ENCODE measurements at regions of chr5 and their contacts with region 1.

Region 1: DNA sequence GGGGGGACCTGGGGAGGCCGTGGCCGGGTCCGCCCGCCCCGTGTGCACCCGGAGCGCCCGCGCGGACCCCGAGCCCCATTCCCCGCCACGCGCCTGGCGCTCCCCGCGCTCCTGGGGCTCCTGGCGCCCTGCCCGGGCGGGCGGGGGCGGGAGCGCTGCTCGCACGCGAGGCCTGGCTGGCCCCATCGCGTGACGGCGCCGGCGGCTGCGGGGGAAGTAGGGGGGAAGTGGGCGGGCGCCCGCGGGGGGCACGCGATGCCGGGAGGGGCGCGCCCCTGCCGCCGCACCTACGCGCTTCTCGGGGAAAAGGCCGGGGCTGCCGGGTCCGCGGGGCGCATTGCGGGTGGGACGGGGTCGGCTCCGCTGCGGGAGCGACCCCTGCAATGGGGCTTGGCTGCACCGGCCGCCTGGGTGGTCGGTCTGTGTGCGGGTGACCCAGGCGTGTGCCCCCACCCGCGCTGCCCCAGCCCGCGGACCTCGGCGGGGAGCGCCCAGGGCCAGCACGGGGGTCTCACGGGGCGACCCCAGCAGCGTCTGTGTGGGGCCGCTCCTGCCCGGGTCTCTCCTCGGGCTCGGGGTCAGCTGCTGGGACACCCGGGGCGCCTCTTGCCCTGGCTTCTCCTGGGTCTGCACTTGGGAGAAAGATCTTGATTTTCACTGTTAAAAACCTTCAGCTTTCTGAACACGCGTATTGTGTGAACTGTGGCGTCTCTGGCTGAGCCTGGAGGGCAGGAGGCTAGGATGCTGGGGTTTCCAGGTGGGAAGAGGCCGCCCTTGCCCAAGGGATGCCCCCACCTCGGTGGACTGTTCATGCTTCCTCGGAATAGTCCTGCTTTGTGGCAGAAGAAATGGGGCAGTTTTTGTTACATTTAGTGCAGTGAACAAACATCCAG is 52.4 kb downstream of the AHRR start:
- DNase-seq: peak; percentile 77
- H3K4me3 Mint-ChIP-seq: peak overlapping the region; percentile 71
- H3K27ac Mint-ChIP-seq: peak overlapping the region; percentile 91
- H3K4me1 Mint-ChIP-seq: peaks cover 69% of the 10 kb centered on the region
- H3K27me3 Mint-ChIP-seq: no peaks in the 10 kb centered on the region

Region 2: GRCh38 chr5:350355-350754 is 23.6 kb before region 1 on chr5:
- intact Hi-C with region 1: no loop called
- DNase-seq: no peak
- H3K4me3 Mint-ChIP-seq: no peak overlapping the region
- H3K27ac Mint-ChIP-seq: peak overlapping the region; percentile 33
- H3K4me1 Mint-ChIP-seq: peaks cover 28% of the 10 kb centered on the region
- H3K27me3 Mint-ChIP-seq: no peaks in the 10 kb centered on the region

Region 3: GRCh38 chr5:392431-392988 is 18.6 kb after region 1 on chr5:
- intact Hi-C with region 1: loop called (anchors 1 kb)
- DNase-seq: peak; percentile 88
- H3K4me3 Mint-ChIP-seq: peak overlapping the region; percentile 72
- H3K27ac Mint-ChIP-seq: peak overlapping the region; percentile 97
- H3K4me1 Mint-ChIP-seq: peaks cover 40% of the 10 kb centered on the region
- H3K27me3 Mint-ChIP-seq: no peaks in the 10 kb centered on the region

Region 4: DNA sequence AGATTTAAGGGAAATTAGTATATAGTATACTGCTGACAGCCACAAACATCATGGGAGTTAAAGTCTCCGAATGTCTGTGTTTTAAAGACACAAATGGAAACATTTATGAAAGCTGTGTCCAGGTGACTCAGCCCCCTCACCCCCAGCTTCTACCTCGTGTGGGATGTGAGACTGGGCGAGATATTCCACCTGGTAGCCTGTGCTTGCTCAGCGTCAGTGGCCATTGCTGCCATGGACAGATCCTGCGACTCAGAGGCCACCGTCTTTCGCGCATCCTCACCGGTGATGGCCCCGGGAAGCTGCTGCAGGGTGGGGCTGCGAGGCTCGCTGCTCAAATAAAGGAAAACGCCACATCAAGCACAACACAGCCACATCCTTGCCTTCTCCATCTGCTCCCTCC is 37.8 kb after region 1 on chr5:
- intact Hi-C with region 1: loop called (anchors 5 kb)
- DNase-seq: no peak
- H3K4me3 Mint-ChIP-seq: no peak overlapping the region
- H3K27ac Mint-ChIP-seq: peak overlapping the region; percentile 69
- H3K4me1 Mint-ChIP-seq: peaks cover 33% of the 10 kb centered on the region
- H3K27me3 Mint-ChIP-seq: no peaks in the 10 kb centered on the region

Region 5: GRCh38 chr5:458547-459353 is 84.8 kb after region 1 on chr5:
- intact Hi-C with region 1: loop called (anchors 5 kb)
- DNase-seq: no peak
- H3K4me3 Mint-ChIP-seq: peak overlapping the region; percentile 59
- H3K27ac Mint-ChIP-seq: peak overlapping the region; percentile 98
- H3K4me1 Mint-ChIP-seq: peaks cover 46% of the 10 kb centered on the region
- H3K27me3 Mint-ChIP-seq: no peaks in the 10 kb centered on the region

Region 6: DNA sequence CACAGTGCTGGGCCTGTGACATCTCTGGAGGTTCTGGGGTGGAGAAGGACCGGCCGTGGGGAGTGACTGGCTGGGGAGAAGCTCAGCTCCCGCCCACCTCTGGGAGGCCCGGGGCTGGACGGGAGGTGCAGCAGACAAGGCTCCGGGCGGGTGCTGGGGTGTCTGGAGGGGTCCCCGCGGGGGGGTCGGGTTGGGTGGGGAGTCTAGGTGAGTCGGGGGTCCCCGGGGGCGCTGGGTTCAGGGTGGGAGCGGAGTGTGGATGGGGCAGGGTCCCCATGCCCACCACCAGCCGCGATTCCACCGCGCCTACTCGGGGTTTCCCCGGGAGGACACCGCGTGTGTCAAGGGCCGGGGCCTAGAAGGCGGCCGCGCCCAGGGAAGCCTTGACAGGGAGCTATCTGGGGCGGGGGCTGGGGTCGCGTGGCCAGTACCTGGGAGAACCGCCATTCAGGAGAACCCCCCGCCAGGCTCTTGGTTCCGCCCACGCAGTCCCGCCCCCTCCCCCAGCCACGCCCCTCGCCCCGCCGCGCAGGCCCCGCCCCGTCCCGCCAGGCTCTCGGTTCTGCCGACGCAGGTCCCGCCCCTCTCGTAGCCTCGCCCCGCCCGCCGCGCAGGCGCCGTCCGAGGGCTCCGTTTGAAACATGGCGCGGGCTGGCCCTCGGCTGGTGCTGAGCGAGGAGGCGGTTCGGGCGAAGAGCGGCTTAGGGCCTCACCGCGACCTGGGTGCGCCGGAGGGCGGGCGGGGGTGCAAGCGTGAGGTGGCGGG is 237.9 kb after region 1 on chr5 and contains the start of gene CEP72:
- intact Hi-C with region 1: loop called (anchors 2 kb)
- DNase-seq: peak; percentile 87
- H3K4me3 Mint-ChIP-seq: peak within 1 kb of the TSS; percentile 92
- H3K27ac Mint-ChIP-seq: peak within 1 kb of the TSS; percentile 88
- H3K4me1 Mint-ChIP-seq: peaks cover 41% of the 10 kb centered on the region
- H3K27me3 Mint-ChIP-seq: no peaks in the 10 kb centered on the region
- total RNA-seq, gene CEP72: 29.6 and 30.2 TPM in 2 replicates